CD8-positive, alpha-beta T cell (primary cell): ENCODE measurements at regions of chr7 and their contacts with region 1.

Region 1: DNA sequence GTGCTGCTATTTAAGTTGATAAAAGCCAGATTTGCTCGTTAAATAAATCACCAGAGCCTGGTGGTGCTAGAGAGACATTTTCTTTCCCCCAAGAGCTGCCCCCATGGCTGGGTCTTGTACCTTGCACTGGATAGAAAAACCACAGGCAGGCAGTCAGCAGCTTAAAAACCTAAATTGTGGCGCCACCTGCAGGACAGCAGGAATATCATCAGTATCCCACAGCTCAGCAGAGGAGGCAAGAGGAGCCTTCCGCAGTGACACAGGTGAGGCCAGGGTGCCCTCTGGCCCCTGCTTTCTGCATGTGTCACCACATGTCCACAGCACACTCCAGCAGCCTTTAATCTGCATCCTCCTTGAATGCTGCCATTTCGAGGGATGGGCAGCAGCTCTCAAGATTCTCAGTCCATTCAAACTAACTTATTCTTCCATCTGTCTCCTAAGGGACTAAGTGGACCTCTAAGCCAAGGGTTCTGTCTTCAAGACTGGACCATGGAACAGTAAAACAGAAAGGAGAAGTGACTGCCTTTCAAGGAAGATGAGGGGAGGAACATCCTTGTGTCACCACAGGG is 4.5 kb upstream of the PLXNA4 start:
- DNase-seq: peak; percentile 39 to 87 (median 65)
- ATAC-seq: peak; percentile 82
- H3K4me3 ChIP-seq: no peak overlapping the region
- H3K4me3 Mint-ChIP-seq: no peak overlapping the region
- H3K27ac ChIP-seq: no peak overlapping the region
- H3K27ac Mint-ChIP-seq: no peak overlapping the region
- H3K4me1 ChIP-seq: peaks cover 11% of the 10 kb centered on the region
- H3K4me1 Mint-ChIP-seq: peaks cover 10% of the 10 kb centered on the region
- H3K27me3 ChIP-seq: peaks cover 3 to 6% of the 10 kb centered on the region in 2 experiments
- H3K27me3 Mint-ChIP-seq: peaks cover 27% of the 10 kb centered on the region
- CTCF ChIP-seq: peak; percentile 87

Region 2: GRCh38 chr7:132130497-132130896 is 450.3 kb before region 1 on chr7:
- CTCF ChIA-PET with region 1: no interaction called
- POLR2A ChIA-PET with region 1: no interaction called
- intact Hi-C with region 1: no loop called
- DNase-seq: no peak
- ATAC-seq: no peak
- H3K4me3 ChIP-seq: no peak overlapping the region
- H3K4me3 Mint-ChIP-seq: no peak overlapping the region
- H3K27ac ChIP-seq: no peak overlapping the region
- H3K27ac Mint-ChIP-seq: peak overlapping the region; percentile 4
- H3K4me1 ChIP-seq: no peaks in the 10 kb centered on the region
- H3K4me1 Mint-ChIP-seq: no peaks in the 10 kb centered on the region
- H3K27me3 ChIP-seq: no peaks in the 10 kb centered on the region
- H3K27me3 Mint-ChIP-seq: no peaks in the 10 kb centered on the region
- CTCF ChIP-seq: no peak

Region 3: DNA sequence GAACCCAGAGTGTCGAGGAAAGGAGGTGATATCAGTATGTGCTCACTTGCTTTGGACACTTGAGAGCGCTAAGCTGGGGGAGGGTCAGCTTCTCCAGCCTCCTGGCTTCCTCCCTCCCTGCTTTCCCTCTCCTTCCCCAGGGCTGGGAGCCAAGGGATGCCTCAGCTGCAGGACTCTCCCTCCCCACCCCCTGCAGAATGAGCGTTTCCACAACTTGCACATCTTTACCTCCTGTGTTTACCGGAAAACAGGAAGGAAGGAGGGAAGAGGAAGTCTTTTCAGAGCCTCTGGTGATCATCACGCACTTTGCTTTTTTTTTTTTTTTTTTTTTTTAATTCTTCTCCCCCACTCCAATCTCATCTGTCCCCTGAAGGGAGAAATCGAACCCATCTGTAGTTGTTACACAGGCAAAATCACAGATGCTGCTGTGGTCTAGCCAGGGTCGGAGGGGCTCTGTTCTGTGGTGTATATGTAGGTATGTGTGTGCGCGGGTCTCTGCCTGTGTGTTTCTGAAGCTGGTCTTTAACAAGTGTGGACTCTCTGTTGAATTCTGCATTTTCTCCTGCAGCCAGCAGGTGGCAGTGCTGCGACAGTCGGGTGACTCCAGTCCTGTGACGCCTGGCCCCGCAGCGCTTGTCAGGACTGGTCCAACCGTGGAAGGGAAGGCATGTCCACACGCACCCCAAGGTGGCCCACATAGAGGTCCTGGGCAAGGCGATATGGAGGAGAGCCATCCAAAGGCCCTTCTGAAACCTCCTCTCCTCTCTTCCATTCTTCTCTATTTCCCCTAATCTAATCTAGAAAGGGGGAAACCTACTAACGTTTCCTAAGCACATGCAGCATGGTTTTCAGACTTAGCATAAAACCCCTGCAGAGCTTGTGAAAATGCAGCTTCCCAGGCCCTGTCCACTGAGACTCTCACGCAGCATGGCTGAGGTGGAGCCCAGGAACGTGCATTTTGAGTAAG is 262.2 kb before region 1 on chr7:
- CTCF ChIA-PET with region 1: interaction called, 98 read pairs
- POLR2A ChIA-PET with region 1: interaction called, 3 read pairs
- intact Hi-C with region 1: loop called (anchors 1 kb)
- DNase-seq: peak; percentile 49 to 85 (median 76)
- ATAC-seq: peak; percentile 88
- H3K4me3 ChIP-seq: no peak overlapping the region
- H3K4me3 Mint-ChIP-seq: peak overlapping the region; percentile 42
- H3K27ac ChIP-seq: no peak overlapping the region
- H3K27ac Mint-ChIP-seq: no peak overlapping the region
- H3K4me1 ChIP-seq: peaks cover 9% of the 10 kb centered on the region
- H3K4me1 Mint-ChIP-seq: peaks cover 8% of the 10 kb centered on the region
- H3K27me3 ChIP-seq: peaks cover 9 to 12% of the 10 kb centered on the region in 2 experiments
- H3K27me3 Mint-ChIP-seq: peaks cover 31% of the 10 kb centered on the region
- CTCF ChIP-seq: peak; percentile 87

Region 4: GRCh38 chr7:132400561-132401142 is 180.1 kb before region 1 on chr7:
- CTCF ChIA-PET with region 1: interaction called, 247 read pairs
- POLR2A ChIA-PET with region 1: no interaction called
- intact Hi-C with region 1: no loop called
- DNase-seq: no peak
- ATAC-seq: no peak
- H3K4me3 ChIP-seq: no peak overlapping the region
- H3K4me3 Mint-ChIP-seq: no peak overlapping the region
- H3K27ac ChIP-seq: no peak overlapping the region
- H3K27ac Mint-ChIP-seq: no peak overlapping the region
- H3K4me1 ChIP-seq: no peaks in the 10 kb centered on the region
- H3K4me1 Mint-ChIP-seq: no peaks in the 10 kb centered on the region
- H3K27me3 ChIP-seq: no peaks in the 10 kb centered on the region
- H3K27me3 Mint-ChIP-seq: no peaks in the 10 kb centered on the region
- CTCF ChIP-seq: no peak

Region 5: DNA sequence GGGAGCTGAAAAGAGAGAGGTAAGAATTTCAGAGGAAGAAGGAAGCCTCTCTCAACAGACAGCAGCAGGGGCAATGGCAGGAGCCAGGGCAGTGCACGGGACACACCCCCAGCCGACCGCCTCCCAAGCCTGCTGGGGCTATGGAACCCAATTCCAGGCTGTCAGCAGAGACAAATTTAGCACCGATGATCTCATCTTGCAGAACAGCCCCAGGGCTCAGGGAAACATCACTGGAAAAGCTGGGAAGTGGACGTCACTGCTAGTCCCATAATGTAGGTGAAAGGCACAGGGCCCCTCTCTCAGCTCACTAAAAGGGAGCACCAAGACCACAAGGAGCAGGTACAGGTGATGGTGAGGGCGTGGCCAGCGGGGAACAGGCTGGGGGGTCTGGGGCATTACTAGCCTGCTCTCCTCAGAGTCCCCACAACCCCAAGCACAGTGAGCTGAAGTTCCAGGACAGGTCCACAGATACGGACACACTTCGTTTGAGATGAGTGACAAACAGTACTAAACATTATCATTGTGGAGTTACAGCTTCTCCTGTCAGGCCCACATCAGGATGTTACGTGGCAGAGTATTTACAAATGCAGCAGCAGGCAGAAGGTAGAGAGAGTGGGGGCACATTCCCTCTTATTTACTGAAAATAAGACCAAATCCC is 108.2 kb before region 1 on chr7:
- CTCF ChIA-PET with region 1: interaction called, 5 read pairs
- POLR2A ChIA-PET with region 1: no interaction called
- intact Hi-C with region 1: loop called in 1 of 2 experiments (anchors 2 kb)
- DNase-seq: no peak
- ATAC-seq: no peak
- H3K4me3 ChIP-seq: no peak overlapping the region
- H3K4me3 Mint-ChIP-seq: no peak overlapping the region
- H3K27ac ChIP-seq: no peak overlapping the region
- H3K27ac Mint-ChIP-seq: no peak overlapping the region
- H3K4me1 ChIP-seq: peaks cover 21% of the 10 kb centered on the region
- H3K4me1 Mint-ChIP-seq: peaks cover 25% of the 10 kb centered on the region
- H3K27me3 ChIP-seq: peaks cover 0 to 2% of the 10 kb centered on the region in 2 experiments
- H3K27me3 Mint-ChIP-seq: no peaks in the 10 kb centered on the region
- CTCF ChIP-seq: no peak

Region 6: GRCh38 chr7:132643302-132643701 is 62.5 kb after region 1 on chr7:
- CTCF ChIA-PET with region 1: no interaction called
- POLR2A ChIA-PET with region 1: no interaction called
- intact Hi-C with region 1: no loop called
- DNase-seq: no peak
- ATAC-seq: no peak
- H3K4me3 ChIP-seq: no peak overlapping the region
- H3K4me3 Mint-ChIP-seq: no peak overlapping the region
- H3K27ac ChIP-seq: no peak overlapping the region
- H3K27ac Mint-ChIP-seq: no peak overlapping the region
- H3K4me1 ChIP-seq: no peaks in the 10 kb centered on the region
- H3K4me1 Mint-ChIP-seq: no peaks in the 10 kb centered on the region
- H3K27me3 ChIP-seq: peaks cover 0 to 7% of the 10 kb centered on the region in 2 experiments
- H3K27me3 Mint-ChIP-seq: no peaks in the 10 kb centered on the region
- CTCF ChIP-seq: no peak